ENCODE measurements at regions of chr11 and their contacts with region 1.

Region 1: DNA sequence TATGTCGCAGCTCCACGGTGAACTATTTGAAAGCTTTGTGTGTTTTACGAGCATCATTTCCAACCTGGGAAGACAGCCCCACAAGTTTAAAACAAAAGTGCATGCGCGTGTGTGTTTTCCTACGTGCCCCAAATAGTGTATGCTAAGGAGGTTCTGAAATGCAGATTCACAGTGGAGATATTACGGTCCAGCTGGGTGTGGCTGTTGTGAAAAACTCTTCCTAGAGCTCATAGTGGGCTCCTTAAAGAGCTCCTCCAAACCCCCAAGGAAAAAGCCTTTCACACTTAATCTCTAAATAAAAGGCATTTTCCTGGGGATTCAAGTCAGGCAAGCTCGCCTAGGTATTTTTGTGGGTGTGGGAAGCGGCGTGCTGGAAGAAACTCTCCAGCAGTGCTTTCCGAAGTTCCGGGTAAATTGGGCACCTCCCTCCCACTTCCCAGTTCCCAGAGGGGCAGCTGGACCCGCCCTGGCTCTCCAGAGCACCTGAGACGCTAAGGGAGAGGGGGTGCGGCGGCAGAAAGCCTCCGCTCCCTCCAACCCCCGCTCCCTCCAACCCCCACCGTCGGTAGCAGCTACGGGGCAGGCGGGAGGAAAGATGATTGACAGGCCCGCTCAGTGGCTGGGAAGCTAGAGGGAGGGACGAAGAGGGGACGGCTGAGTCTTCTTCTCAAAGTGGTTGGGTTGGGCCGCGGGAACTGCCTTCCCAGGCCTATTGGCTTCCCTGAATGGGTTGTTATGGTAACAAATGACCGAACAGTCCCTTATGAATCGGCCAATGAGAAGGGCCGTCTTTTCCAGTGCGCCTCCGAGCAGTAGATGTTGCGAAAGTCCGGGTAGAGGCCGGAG is 558 bp upstream of the PCF11 start:
- DNase-seq: peak; percentile 93
- H3K4me3 ChIP-seq: peak overlapping the region; percentile 65 to 75
- H3K27ac ChIP-seq: peak overlapping the region; percentile 90 to 92
- H3K4me1 ChIP-seq: peaks cover 6 to 11% of the 10 kb centered on the region in 2 experiments; a peak in 3 of 4 replicates
- H3K27me3 ChIP-seq: no peaks in the 10 kb centered on the region
- CTCF ChIP-seq: no peak
- EP300 ChIP-seq: peak; percentile 21 to 48; a peak in 1 of 4 replicates
- RAD21 ChIP-seq: 0 out of 2 replicates have a peak, but pooled peaks have one; percentile 6

Region 2: DNA sequence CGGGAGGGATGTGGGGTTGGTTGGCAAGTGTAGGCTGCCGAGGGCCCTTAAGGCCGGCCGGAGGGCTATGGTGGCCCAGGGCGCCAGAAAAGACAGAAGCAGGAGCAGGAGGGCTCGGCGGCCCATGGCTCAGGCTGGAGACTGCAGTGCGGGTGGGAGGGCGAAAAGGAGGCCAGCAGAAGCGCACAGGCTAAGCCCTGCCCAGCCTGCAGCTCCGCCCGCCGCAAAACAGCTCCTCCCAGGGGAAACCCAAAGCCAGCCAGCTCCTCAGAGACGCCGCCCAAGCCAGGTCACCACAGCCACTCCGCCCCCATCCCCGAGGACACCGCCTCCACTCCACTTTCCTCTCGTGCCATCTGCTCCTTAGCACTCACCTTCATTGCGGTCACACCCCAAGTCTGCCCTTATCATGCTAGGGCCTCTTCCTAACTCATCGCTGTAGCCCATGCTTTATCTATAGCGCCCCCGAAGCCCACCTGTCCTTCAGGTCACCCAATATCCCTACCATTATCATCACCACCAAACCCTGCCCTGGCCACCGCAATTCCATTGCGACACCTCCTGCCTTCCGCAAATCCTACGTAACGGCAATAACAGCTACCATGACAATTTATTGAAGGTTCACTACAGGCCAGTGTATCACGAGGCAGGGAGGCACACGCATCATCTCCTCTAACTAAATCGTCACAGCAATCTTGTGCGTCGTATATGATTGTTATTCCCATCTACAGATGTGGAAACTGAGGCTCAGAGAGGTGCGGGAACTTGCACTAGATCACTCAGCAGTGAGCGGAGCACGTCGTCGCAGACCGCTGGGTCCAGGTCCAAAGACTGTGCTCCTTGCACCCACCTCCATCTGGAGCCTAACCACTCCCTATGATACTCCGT is 255.9 kb before region 1 on chr11 and contains the start of gene PRCP:
- CTCF ChIA-PET with region 1: interaction called, 4 read pairs
- POLR2A ChIA-PET with region 1: interaction called, 11 read pairs
- DNase-seq: peak; percentile 89
- H3K4me3 ChIP-seq: peak within 1 kb of the TSS; percentile 78 to 90
- H3K27ac ChIP-seq: peak within 1 kb of the TSS; percentile 70 to 95
- H3K4me1 ChIP-seq: peaks cover 0 to 24% of the 10 kb centered on the region in 2 experiments; a peak in 3 of 4 replicates
- H3K27me3 ChIP-seq: no peaks in the 10 kb centered on the region
- CTCF ChIP-seq: 0 out of 2 replicates have a peak, but pooled peaks have one; percentile 11
- EP300 ChIP-seq: no peak
- RAD21 ChIP-seq: 0 out of 2 replicates have a peak, but pooled peaks have one; percentile 2
- polyA plus RNA-seq, gene PRCP: 65.0 and 91.7 TPM in 2 replicates

Region 3: DNA sequence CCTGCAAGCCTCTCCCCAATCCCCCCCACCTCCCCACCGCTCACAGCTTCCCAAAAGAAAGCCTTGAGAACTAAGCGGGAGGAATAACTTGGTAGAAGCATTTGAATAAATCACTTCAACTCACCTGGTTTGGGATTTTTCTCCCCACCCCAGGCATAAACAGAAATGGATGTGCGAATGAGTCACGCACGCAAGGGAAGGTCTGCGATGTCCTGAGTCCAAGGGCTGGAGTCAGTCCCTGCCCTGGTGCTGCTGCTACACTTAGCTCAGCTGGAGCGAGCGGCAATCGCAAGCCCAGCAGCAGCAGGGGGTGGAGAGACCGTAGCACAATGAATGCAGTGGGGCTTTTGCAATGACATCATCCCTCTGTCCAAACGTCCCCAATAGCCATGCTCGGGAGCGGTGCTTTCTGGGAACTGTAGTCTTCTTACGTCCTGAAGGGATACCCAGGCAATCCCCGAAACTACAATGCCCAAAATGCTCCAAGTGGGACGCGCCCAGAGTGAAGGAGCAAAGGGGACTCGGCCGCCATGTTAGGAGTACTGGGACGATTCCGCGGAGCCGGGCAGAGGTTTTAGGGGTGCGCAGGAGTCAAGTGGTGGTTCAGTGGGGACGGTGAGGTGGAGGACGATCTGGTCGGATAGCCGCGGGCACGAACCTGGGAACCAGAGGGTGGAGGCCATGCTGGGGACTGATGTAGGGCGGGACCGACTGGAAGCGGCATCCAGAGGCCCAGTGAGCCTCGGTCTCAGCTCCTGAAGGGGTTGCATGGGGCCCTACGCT is 84.6 kb before region 1 on chr11 and contains the start of gene RAB30:
- CTCF ChIA-PET with region 1: no interaction called
- POLR2A ChIA-PET with region 1: interaction called, 14 read pairs
- DNase-seq: peak; percentile 87
- H3K4me3 ChIP-seq: peak within 1 kb of the TSS; percentile 79 to 86
- H3K27ac ChIP-seq: peak within 1 kb of the TSS; percentile 86 to 92
- H3K4me1 ChIP-seq: peaks cover 9 to 23% of the 10 kb centered on the region in 2 experiments; a peak in 2 of 4 replicates
- H3K27me3 ChIP-seq: no peaks in the 10 kb centered on the region
- CTCF ChIP-seq: no peak
- EP300 ChIP-seq: no peak
- RAD21 ChIP-seq: peak; percentile 45
- polyA plus RNA-seq, gene RAB30: 3.3 and 4.5 TPM in 2 replicates

Region 4: GRCh38 chr11:83092488-83093384 is 63.6 kb before region 1 on chr11:
- CTCF ChIA-PET with region 1: no interaction called
- POLR2A ChIA-PET with region 1: interaction called, 10 read pairs
- DNase-seq: peak; percentile 61
- H3K4me3 ChIP-seq: no peak overlapping the region
- H3K27ac ChIP-seq: peak overlapping the region in 1 of 2 experiments; percentile 74; a peak in 2 of 4 replicates
- H3K4me1 ChIP-seq: peaks cover 7 to 9% of the 10 kb centered on the region in 2 experiments; a peak in 2 of 4 replicates
- H3K27me3 ChIP-seq: no peaks in the 10 kb centered on the region
- CTCF ChIP-seq: no peak
- EP300 ChIP-seq: peak in 1 of 2 experiments; percentile 83; a peak in 2 of 4 replicates
- RAD21 ChIP-seq: peak; percentile 31

Region 5: DNA sequence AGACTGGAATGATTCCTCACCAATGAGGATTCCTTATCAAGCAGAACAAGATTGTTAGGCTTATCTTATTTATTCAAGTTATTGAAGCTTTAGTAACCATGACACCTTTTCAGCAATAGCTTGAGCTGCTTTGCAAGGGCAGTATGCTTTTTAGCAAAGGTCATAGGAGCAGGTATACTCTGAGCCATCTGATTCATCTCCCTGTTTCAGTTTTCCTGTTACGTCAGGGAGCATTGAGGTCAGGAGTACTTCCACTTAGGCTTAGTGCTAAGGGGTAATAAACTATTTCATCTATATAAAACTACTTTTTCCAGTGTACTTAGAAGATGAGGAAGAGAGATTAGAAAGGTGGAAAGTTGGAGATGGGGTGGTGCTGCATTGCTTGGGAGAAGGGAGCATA is 19.4 kb after region 1 on chr11:
- CTCF ChIA-PET with region 1: no interaction called
- POLR2A ChIA-PET with region 1: no interaction called
- DNase-seq: no peak
- H3K4me3 ChIP-seq: no peak overlapping the region
- H3K27ac ChIP-seq: no peak overlapping the region
- H3K4me1 ChIP-seq: peaks cover 0 to 8% of the 10 kb centered on the region in 2 experiments; a peak in 2 of 4 replicates
- H3K27me3 ChIP-seq: no peaks in the 10 kb centered on the region
- CTCF ChIP-seq: no peak
- EP300 ChIP-seq: no peak
- RAD21 ChIP-seq: no peak

Measured in SK-N-SH (cell line).